PC-3 (cell line): ENCODE measurements at regions of chr10 and their contacts with region 1.

Region 1: GRCh38 chr10:22251751-22252223 is 34.0 kb upstream of the EBLN1 start:
- DNase-seq: peak; percentile 48
- ATAC-seq: peak; percentile 32
- H3K4me3 ChIP-seq: peak overlapping the region; percentile 68
- H3K27ac ChIP-seq: peak overlapping the region; percentile 89
- H3K4me1 ChIP-seq: peaks cover 31% of the 10 kb centered on the region
- H3K27me3 ChIP-seq: no peaks in the 10 kb centered on the region
- CTCF ChIP-seq: no peak

Region 2: DNA sequence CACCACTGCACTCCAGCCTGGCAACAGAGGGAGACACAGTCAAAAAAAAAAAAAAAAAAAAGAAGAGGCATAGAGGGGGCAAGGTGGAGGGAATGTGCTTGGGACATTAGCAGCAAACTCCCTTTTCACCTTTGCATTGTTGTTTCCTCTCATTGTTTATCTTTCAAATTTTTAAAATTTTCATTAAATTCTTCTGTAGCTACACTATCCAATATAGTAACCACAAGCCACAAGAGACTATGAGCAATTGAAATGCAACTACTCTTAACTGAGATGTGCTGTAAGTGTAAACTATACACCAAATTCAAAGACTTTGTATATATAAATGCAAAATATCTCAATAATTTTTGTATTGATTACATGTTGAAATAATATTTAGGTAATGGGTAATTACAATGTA is 77.3 kb before region 1 on chr10:
- CTCF ChIA-PET with region 1: no interaction called
- POLR2A ChIA-PET with region 1: no interaction called
- intact Hi-C with region 1: no loop called
- DNase-seq: peak; percentile 54
- ATAC-seq: peak; percentile 90
- H3K4me3 ChIP-seq: no peak overlapping the region
- H3K27ac ChIP-seq: no peak overlapping the region
- H3K4me1 ChIP-seq: peaks cover 18% of the 10 kb centered on the region
- H3K27me3 ChIP-seq: no peaks in the 10 kb centered on the region
- CTCF ChIP-seq: no peak

Region 3: DNA sequence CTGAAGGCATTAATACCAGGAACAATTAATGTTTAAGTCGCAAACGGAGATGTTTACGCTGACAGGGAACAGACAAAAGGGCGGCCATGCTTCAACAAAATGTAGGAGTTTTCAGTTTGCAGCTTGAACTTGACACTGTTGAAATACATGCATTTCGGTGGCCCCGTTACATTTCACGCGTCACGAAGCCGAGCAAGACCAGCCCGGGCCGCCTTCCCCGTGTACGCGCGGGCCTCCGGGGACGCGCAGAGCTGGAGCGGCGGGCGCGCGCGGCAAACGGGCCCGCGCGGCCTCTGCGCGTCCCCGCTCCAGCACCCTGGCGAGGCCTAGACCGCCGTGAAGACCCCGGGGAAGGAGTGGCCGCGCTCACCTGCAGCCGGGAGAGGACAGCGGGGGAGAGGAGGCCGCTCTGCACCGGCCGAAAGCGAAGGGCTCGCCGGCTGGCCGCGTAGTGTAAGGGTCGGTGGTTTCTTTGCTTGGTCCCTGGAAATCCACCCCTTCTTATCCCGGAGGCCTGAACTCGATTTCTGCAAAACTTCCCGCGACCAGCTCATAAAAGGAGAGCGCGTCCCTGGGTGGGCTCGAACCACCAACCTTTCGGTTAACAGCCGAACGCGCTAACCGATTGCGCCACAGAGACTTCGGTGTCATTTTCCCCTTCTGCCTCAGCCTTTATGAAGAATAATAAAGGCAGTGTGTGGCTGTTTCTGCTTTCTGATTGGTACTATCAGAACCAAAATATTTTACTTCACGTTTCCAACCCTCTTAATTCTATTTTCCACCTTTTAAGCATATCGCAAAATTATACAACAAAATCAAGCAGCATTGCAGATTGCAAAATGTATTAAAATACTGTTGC is 22.6 kb before region 1 on chr10:
- CTCF ChIA-PET with region 1: interaction called, 4 read pairs
- POLR2A ChIA-PET with region 1: no interaction called
- intact Hi-C with region 1: loop called (anchors 1 kb)
- DNase-seq: peak; percentile 86
- ATAC-seq: peak; percentile 71
- H3K4me3 ChIP-seq: peak overlapping the region; percentile 99
- H3K27ac ChIP-seq: peak overlapping the region; percentile 86
- H3K4me1 ChIP-seq: peaks cover 14% of the 10 kb centered on the region
- H3K27me3 ChIP-seq: no peaks in the 10 kb centered on the region
- CTCF ChIP-seq: no peak

Region 4: GRCh38 chr10:22308390-22308789 is 56.6 kb after region 1 on chr10:
- CTCF ChIA-PET with region 1: interaction called, 3 read pairs
- POLR2A ChIA-PET with region 1: interaction called, 4 read pairs
- intact Hi-C with region 1: loop called (anchors 1 kb)
- DNase-seq: peak; percentile 94
- ATAC-seq: peak; percentile 89
- H3K4me3 ChIP-seq: no peak overlapping the region
- H3K27ac ChIP-seq: peak overlapping the region; percentile 100
- H3K4me1 ChIP-seq: peaks cover 73% of the 10 kb centered on the region
- H3K27me3 ChIP-seq: no peaks in the 10 kb centered on the region
- CTCF ChIP-seq: no peak